Activated CD8-positive, alpha-beta T cell treated with anti-CD3 and anti-CD28 coated beads for 36 hours (primary cell): ENCODE measurements at regions of chr3 and their contacts with region 1.

Region 1: GRCh38 chr3:190883973-190884832 is 21.7 kb upstream of the GMNC start:
- DNase-seq: peak; percentile 51
- ATAC-seq: no peak
- H3K4me3 Mint-ChIP-seq: no peak overlapping the region
- H3K27ac Mint-ChIP-seq: no peak overlapping the region
- H3K4me1 Mint-ChIP-seq: no peaks in the 10 kb centered on the region
- H3K27me3 Mint-ChIP-seq: peaks cover 4% of the 10 kb centered on the region
- CTCF ChIP-seq: peak; percentile 68

Region 2: GRCh38 chr3:191051037-191051436 is 166.8 kb after region 1 on chr3:
- CTCF ChIA-PET with region 1: interaction called, 13 read pairs
- POLR2A ChIA-PET with region 1: no interaction called
- intact Hi-C with region 1: loop called (anchors 5 kb)
- DNase-seq: no peak
- ATAC-seq: no peak
- H3K4me3 Mint-ChIP-seq: no peak overlapping the region
- H3K27ac Mint-ChIP-seq: no peak overlapping the region
- H3K4me1 Mint-ChIP-seq: no peaks in the 10 kb centered on the region
- H3K27me3 Mint-ChIP-seq: no peaks in the 10 kb centered on the region
- CTCF ChIP-seq: peak; percentile 44